ENCODE measurements at regions of chr12 and their contacts with region 1.

Region 1: GRCh38 chr12:122399592-122400373 is 22.7 kb downstream of the CLIP1 start:
- DNase-seq: peak; percentile 96
- H3K4me3 Mint-ChIP-seq: peak overlapping the region; percentile 72
- H3K27ac Mint-ChIP-seq: peak overlapping the region; percentile 98
- H3K4me1 Mint-ChIP-seq: peaks cover 29% of the 10 kb centered on the region
- H3K27me3 Mint-ChIP-seq: no peaks in the 10 kb centered on the region
- CTCF ChIP-seq: peak; percentile 66

Region 2: DNA sequence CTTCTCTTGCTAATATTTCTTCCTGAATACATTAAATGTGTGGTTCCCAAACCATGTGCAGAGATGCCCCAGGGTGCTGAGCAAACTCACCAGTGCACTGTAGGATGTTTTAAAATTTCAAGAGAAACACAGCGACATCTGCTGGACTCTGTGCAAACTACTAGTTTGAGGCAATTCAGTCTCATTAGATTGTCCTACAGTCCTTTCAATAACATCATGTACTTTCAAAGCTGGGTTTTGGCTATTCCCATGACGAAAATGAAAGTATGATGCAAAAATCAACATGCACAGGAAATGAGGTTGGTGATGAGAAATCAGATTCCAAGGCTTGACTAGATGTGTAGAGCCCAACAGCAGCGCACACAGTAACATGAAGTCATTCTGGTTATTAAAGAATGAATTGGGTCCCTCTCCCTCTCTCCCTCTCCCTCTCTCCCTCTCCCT is 43.6 kb before region 1 on chr12:
- CTCF ChIA-PET with region 1: interaction called, 12 read pairs
- POLR2A ChIA-PET with region 1: no interaction called
- intact Hi-C with region 1: no loop called
- DNase-seq: peak; percentile 69
- H3K4me3 Mint-ChIP-seq: no peak overlapping the region
- H3K27ac Mint-ChIP-seq: no peak overlapping the region
- H3K4me1 Mint-ChIP-seq: peaks cover 6% of the 10 kb centered on the region
- H3K27me3 Mint-ChIP-seq: no peaks in the 10 kb centered on the region
- CTCF ChIP-seq: peak; percentile 78

Region 3: GRCh38 chr12:122413516-122414404 is 14.0 kb after region 1 on chr12:
- CTCF ChIA-PET with region 1: interaction called, 15 read pairs
- POLR2A ChIA-PET with region 1: interaction called, 145 read pairs
- intact Hi-C with region 1: no loop called
- DNase-seq: no peak
- H3K4me3 Mint-ChIP-seq: no peak overlapping the region
- H3K27ac Mint-ChIP-seq: peak overlapping the region; percentile 0
- H3K4me1 Mint-ChIP-seq: peaks cover 12% of the 10 kb centered on the region
- H3K27me3 Mint-ChIP-seq: no peaks in the 10 kb centered on the region
- CTCF ChIP-seq: no peak

Region 4: GRCh38 chr12:122427412-122427811 is 27.6 kb after region 1 on chr12:
- CTCF ChIA-PET with region 1: interaction called, 14 read pairs
- POLR2A ChIA-PET with region 1: interaction called, 145 read pairs
- intact Hi-C with region 1: no loop called
- DNase-seq: no peak
- H3K4me3 Mint-ChIP-seq: no peak overlapping the region
- H3K27ac Mint-ChIP-seq: no peak overlapping the region
- H3K4me1 Mint-ChIP-seq: peaks cover 4% of the 10 kb centered on the region
- H3K27me3 Mint-ChIP-seq: no peaks in the 10 kb centered on the region
- CTCF ChIP-seq: no peak

Region 5: DNA sequence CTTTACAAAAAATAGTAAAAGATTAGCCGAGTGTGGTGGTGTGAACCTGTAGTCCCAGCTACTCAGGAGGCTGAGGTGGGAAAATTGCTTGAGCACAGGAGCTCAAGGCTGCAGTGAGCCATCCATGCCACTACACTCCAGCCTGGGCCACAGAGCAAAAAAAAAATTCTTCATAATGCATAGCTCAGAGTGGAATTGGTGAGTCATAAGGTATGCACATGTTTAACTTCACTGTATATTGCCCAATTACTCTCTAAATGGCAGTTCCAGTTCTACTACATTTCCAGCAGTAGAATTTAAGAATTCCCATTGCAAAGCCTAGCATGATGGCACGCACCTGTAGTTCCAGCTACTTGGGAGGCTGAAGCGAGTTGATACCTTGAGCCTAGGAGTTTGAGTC is 49.6 kb after region 1 on chr12:
- CTCF ChIA-PET with region 1: interaction called, 7 read pairs
- POLR2A ChIA-PET with region 1: interaction called, 15 read pairs
- intact Hi-C with region 1: no loop called
- DNase-seq: peak; percentile 90
- H3K4me3 Mint-ChIP-seq: no peak overlapping the region
- H3K27ac Mint-ChIP-seq: no peak overlapping the region
- H3K4me1 Mint-ChIP-seq: peaks cover 15% of the 10 kb centered on the region
- H3K27me3 Mint-ChIP-seq: no peaks in the 10 kb centered on the region
- CTCF ChIP-seq: no peak

Region 6: GRCh38 chr12:122471324-122472226 is 71.8 kb after region 1 on chr12:
- CTCF ChIA-PET with region 1: interaction called, 127 read pairs
- POLR2A ChIA-PET with region 1: interaction called, 292 read pairs
- intact Hi-C with region 1: loop called (anchors 1 kb)
- DNase-seq: peak; percentile 81
- H3K4me3 Mint-ChIP-seq: no peak overlapping the region
- H3K27ac Mint-ChIP-seq: peak overlapping the region; percentile 74
- H3K4me1 Mint-ChIP-seq: peaks cover 21% of the 10 kb centered on the region
- H3K27me3 Mint-ChIP-seq: no peaks in the 10 kb centered on the region
- CTCF ChIP-seq: peak; percentile 64

Region 7: GRCh38 chr12:122526683-122527477 is 127.1 kb after region 1 on chr12 and contains the starts of genes KNTC1 and RSRC2:
- CTCF ChIA-PET with region 1: interaction called, 4 read pairs
- POLR2A ChIA-PET with region 1: interaction called, 53 read pairs
- intact Hi-C with region 1: no loop called
- DNase-seq: peak; percentile 100
- H3K4me3 Mint-ChIP-seq: no peak within 1 kb of the TSS
- H3K27ac Mint-ChIP-seq: no peak within 1 kb of the TSS
- H3K4me1 Mint-ChIP-seq: peaks cover 7% of the 10 kb centered on the region
- H3K27me3 Mint-ChIP-seq: no peaks in the 10 kb centered on the region
- CTCF ChIP-seq: no peak
- total RNA-seq, gene KNTC1: 18.0 and 26.1 TPM in 2 replicates
- total RNA-seq, gene RSRC2: 74.9 and 93.4 TPM in 2 replicates